Dorsolateral prefrontal cortex (tissue), 120 donors: ENCODE measurements at regions of chr2 and their contacts with region 1.

Region 1: GRCh38 chr2:158723917-158724690 is 71.0 kb upstream of the DAPL1 start:
- DNase-seq: peak in 5 of 10 donors; percentile 44 to 61 (median 56)
- H3K4me3 ChIP-seq: peak overlapping the region in 10 of 59 donors; percentile 0 to 29 (median 16)
- H3K27ac ChIP-seq: peak overlapping the region in 56 of 59 donors; percentile 1 to 98 (median 84)
- H3K27me3 ChIP-seq: no peaks in the 10 kb centered on the region
- CTCF ChIP-seq: peak in 53 of 56 donors; percentile 26 to 75 (median 54)

Region 2: DNA sequence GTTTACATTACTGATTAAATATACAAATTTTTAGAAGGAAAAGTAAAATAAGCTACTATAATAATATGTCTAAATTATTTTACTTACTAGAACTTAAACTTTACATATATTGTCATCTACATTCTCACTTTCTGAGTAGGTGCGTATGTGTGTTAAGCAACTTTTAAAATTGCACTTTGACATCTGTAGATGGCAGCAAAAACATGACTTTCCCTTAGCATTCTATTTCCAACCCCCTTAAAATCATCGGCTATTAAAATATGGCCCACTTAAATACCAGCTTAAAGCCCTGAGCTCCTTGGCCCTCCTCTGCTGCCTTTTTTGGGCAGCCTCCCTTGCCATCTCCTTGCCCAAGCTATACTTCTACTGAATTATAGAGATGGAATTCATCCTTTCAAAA is 544.4 kb before region 1 on chr2:
- intact Hi-C with region 1: loop called in 1 of 2 experiments (anchors 10 kb)
- DNase-seq: no peak
- H3K4me3 ChIP-seq: no peak overlapping the region
- H3K27ac ChIP-seq: no peak overlapping the region
- H3K27me3 ChIP-seq: no peaks in the 10 kb centered on the region
- CTCF ChIP-seq: peak in 55 of 56 donors; percentile 20 to 79 (median 56)

Region 3: DNA sequence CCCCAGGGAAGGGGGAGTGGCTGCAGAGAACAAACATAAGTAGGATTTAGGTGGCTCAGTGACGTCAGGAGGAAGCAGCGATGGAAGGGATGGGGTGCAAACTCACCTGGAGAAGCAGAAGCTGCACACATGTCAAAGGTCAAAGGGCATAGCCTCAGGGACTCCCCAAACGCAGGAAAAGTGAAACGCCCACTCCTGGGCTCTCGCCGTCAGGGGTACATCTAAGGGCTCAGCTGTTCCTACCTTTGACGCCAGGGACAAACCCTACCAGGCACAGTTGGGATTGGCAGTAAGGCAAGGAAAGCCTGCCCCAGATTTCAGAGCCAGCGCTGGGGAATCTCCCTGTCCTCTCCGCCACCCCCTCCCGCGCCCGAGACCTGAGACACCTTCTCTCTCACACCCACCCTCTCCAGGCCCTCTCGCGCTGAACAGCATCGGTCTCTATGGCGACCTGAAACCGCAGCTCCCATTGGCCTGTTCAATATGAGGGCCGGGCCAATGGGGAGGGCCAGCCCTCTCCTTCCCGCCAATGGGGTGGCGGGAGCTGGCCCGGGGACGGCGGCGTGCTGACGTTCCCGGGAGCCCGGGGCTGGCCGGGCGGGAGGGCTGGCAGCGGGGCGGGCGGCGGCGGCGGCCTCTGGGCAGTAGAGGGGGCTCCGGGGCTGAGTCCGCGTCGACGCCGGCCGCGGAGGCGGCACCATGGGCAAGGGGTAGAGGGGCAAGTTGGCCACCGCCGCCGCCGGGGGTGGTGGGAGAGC is 267.6 kb before region 1 on chr2 and contains the starts of genes CCDC148 and PKP4:
- intact Hi-C with region 1: loop called (anchors 1 to 2 kb)
- DNase-seq: peak; percentile 81 to 96 (median 92)
- H3K4me3 ChIP-seq: peak within 1 kb of the TSS; percentile 59 to 98 (median 87)
- H3K27ac ChIP-seq: peak within 1 kb of the TSS; percentile 54 to 99 (median 95)
- H3K27me3 ChIP-seq: no peaks in the 10 kb centered on the region
- CTCF ChIP-seq: peak in 20 of 56 donors; percentile 3 to 53 (median 21)
- total RNA-seq, gene CCDC148: 4.8 to 15.3 (median 8.3) TPM
- total RNA-seq, gene PKP4: 163 to 459 (median 237) TPM

Region 4: GRCh38 chr2:158686210-158686691 is 37.9 kb before region 1 on chr2:
- intact Hi-C with region 1: loop called (anchors 1 to 2 kb)
- DNase-seq: peak; percentile 23 to 86 (median 76)
- H3K4me3 ChIP-seq: peak overlapping the region in 10 of 59 donors; percentile 8 to 32 (median 18)
- H3K27ac ChIP-seq: peak overlapping the region in 41 of 59 donors; percentile 0 to 80 (median 43)
- H3K27me3 ChIP-seq: no peaks in the 10 kb centered on the region
- CTCF ChIP-seq: peak in 7 of 56 donors; percentile 4 to 24 (median 10)

Region 5: DNA sequence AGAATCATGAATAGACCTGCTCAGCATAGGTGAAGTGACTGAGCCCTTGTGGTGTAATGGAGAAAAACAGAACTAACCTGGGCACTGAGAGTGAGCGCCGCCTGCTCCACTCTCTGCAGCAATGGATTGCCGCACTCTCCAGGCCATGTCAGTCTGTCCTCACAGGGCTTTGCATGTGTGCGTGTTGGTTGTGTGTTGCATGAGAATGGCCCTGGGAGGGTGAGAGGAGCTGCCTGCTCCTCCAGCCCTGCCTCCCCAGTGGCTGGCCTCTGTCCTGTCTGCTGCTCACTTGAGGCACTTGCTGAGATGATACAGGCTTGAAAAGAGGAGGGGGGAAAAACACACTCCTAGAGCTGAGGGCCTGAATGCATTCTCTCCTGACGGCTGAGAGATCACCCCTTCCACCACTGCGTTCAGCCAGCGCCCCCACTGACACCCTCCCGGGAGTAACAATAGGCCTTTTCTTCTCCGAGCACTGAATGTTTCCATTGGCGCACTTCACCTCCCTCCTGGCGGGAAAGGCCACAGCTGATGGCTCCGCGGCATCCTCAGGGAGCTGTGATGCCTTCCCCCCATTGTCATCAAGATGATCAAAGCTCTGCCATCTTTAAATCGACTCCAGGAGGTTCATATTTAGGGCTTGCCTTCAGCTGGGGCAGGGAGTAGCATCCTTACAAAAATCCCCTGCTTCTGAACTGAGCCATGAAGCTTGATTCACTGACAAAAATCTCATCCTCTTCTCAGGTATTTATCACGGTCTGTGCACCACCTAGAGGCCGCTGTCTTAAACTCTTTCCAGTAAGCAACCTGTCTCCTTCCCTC is 21.2 kb after region 1 on chr2:
- intact Hi-C with region 1: loop called (anchors 1 kb)
- DNase-seq: peak; percentile 49 to 79 (median 70)
- H3K4me3 ChIP-seq: peak overlapping the region in 23 of 59 donors; percentile 1 to 35 (median 18)
- H3K27ac ChIP-seq: peak overlapping the region in 36 of 59 donors; percentile 6 to 76 (median 37)
- H3K27me3 ChIP-seq: peaks cover 0 to 6% (median 0%) of the 10 kb centered on the region in 45 donors
- CTCF ChIP-seq: peak in 54 of 56 donors; percentile 33 to 77 (median 58)

Region 6: DNA sequence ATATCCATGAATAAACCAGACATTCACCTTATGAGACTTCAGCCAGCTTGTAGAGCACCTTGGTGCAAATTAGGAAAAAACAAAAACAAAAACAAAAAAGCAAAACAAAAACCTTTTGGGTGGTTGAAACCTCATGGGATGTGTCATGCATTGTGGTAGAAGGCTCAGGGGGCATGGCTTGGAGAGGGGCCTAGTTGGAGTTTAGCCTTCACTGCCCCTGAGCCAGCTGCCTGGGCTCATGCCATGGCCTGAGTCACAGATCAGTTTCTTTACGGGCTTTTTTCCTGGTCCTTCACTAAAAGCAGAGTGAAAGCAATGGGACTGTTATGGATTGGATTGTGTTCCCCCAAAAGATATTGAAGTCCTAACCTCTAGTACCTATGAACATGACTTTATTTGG is 49.0 kb after region 1 on chr2:
- intact Hi-C with region 1: loop called in 1 of 2 experiments (anchors 2 kb)
- DNase-seq: peak in 2 of 10 donors; percentile 43 to 46
- H3K4me3 ChIP-seq: peak overlapping the region in 7 of 59 donors; percentile 4 to 47 (median 25)
- H3K27ac ChIP-seq: peak overlapping the region in 28 of 59 donors; percentile 5 to 77 (median 60)
- H3K27me3 ChIP-seq: no peaks in the 10 kb centered on the region
- CTCF ChIP-seq: no peak

Region 7: DNA sequence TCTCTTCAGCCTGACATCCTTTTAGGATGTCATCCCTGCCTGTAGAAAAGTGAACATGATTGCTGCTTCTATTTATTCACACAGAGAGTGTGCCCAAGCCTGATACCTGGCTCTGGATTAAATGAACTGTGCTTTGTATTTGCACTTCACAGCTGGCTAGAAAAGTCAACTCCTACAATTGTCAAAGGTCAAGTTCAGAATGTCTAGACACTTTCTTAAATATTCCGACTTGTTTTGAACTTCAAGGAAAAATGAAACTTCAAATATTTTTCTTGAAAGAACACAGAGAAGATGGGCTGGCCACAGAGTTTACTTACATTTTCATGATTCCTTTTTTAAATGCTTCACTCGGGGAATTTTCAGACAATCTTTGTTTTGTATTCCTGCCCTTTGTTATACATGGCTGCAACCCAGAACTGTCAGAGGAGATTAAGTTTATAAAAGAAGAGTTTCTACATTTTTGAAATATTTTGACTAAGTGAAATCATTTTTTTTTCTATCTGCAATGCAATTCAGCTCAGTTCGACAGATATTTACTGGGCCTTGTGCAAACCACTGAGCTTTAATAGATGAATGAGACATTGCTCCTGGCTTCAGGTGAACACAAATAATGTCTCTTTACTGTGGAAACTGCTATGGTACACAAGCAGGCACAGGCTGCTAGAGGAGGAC is 104.5 kb after region 1 on chr2:
- intact Hi-C with region 1: no loop called
- DNase-seq: no peak
- H3K4me3 ChIP-seq: no peak overlapping the region
- H3K27ac ChIP-seq: no peak overlapping the region
- H3K27me3 ChIP-seq: no peaks in the 10 kb centered on the region
- CTCF ChIP-seq: no peak